GM10248 (cell line): ENCODE measurements at regions of chr11 and their contacts with region 1.

Region 1: DNA sequence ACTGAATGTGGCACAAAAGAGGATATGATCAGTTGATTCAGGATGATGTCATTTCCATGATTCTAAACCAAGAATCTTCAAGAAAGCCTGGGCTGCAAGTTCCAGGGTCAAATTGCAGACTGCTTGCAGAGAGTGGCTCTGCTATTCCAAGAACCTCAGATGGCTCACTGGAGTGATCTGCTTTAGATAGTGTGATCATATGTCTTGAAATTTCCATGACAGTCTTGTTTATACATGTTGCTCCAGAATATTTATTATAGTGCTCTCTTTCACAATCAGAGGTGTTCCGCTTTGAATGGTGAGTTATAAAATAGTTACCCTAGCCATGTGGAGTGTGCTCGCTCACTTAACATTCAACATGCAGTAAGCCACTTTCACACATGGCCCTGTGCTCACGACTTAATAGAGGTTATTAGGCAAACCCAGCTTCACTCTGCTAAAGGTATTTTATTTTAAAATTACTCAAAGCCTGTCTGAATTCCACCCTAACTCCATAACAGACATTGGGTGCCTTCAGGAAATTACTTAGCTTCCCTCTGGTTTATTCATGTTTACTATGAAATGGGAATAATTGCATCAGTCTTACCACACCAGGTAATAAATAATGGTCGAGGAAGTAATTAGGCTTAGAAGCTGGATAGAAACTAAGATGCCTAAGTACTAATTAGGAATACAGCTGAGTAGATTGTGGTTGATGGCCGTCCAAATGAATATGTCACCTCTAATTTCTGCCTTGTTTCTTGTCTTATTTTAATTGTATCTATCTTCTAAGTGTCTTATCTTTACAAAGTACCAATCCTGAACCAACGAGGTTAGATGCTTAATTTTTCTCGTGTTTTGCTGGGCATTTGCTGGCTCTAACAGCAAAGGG is 187.9 kb downstream of the ETS1 start:
- DNase-seq: no peak
- CTCF ChIP-seq: no peak

Region 2: DNA sequence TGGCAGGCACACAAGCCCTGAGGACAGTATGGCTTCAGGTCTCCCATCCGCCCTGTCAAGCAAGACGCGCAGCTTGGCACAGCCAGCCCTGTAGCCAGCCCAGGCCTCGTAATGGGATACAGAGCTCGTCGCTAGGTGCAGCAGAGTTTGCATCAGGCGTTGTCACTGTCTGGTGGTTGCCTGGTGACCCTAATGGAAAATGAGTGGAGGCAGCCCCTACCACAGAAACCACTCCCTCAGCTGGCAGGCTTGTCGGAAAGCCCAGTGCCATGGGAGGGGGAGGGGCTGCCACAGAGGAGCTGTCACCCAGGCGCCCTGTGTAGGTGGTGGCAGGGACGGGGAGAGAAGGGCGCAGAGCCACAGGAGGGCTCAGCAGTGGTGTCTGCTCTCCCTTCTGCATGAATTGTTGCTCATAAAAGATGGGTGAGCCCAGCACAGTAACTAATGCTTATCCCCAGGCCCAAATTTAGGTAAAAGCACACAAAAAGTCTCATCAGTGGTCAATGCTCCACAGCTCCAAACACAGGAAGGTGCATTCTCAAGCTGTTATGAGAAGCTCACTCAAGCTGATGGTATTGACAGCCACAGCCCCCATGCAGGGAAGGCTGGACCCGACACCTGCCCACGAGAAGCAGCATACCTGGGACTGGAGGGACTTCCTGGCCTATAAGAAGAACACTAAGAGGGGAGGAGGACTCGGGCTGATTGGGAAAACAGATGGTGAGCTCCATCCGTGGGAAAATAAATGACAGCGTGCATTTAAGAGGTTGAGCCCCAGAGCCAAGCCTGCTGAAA is 23.3 kb after region 1 on chr11:
- CTCF ChIA-PET with region 1: interaction called, 13 read pairs
- POLR2A ChIA-PET with region 1: no interaction called
- DNase-seq: no peak
- CTCF ChIP-seq: no peak